ENCODE measurements at regions of chr19 and their contacts with region 1.

Region 1: GRCh38 chr19:924943-925525 is 801 bp upstream of the ARID3A start:
- DNase-seq: no peak
- H3K4me3 ChIP-seq: peak overlapping the region; percentile 70 to 97 (median 90)
- H3K27ac ChIP-seq: peak overlapping the region; percentile 90 to 96 (median 91)
- H3K4me1 ChIP-seq: peaks cover 25 to 72% (median 28%) of the 10 kb centered on the region in 3 donors
- H3K27me3 ChIP-seq: peaks cover under 1 to 16% (median 3%) of the 10 kb centered on the region in 4 donors
- CTCF ChIP-seq: no peak
- POLR2A ChIP-seq: no peak

Region 2: DNA sequence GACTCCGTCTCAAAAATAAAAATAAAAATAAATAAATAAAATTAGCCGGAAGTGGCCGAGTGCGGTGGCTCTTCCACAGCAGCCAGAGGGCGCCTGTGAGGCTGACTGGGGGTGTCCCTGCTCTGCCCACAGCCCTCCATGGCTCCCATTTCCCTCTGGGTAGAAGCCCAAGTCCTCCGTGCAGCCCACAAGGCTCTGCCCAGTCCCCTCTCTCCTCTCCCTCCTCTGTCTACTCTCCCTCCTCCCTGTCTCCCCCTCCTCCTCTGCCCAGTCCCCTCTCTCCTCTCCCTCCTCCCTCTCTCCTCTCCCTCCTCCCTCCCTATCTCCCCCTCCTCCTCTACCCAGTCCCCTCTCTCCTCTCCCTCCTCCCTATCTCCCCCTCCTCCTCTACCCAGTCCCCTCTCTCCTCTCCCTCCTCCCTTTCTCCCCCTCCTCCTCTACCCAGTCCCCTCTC is 153.7 kb before region 1 on chr19:
- intact Hi-C with region 1: loop called (anchors 5 kb)
- DNase-seq: no peak
- H3K4me3 ChIP-seq: no peak overlapping the region
- H3K27ac ChIP-seq: no peak overlapping the region
- H3K4me1 ChIP-seq: peaks cover 0 to 16% (median 0%) of the 10 kb centered on the region in 3 donors
- H3K27me3 ChIP-seq: peaks cover 0 to 9% (median 0%) of the 10 kb centered on the region in 4 donors
- CTCF ChIP-seq: peak; percentile 19 to 58 (median 46)
- POLR2A ChIP-seq: no peak

Region 3: GRCh38 chr19:860481-861101 is 64.4 kb before region 1 on chr19:
- intact Hi-C with region 1: loop called (anchors 5 kb)
- DNase-seq: no peak
- H3K4me3 ChIP-seq: peak overlapping the region; percentile 32 to 75 (median 46)
- H3K27ac ChIP-seq: peak overlapping the region in 3 of 4 donors; percentile 65 to 80 (median 72)
- H3K4me1 ChIP-seq: peaks cover 9 to 58% (median 33%) of the 10 kb centered on the region in 3 donors
- H3K27me3 ChIP-seq: peaks cover 0 to 60% (median 0%) of the 10 kb centered on the region in 4 donors
- CTCF ChIP-seq: peak in 5 of 6 experiments; percentile 9 to 29 (median 21)
- POLR2A ChIP-seq: peak in 1 of 4 donors; percentile 58

Region 4: GRCh38 chr19:973726-974562 is 48.9 kb after region 1 on chr19:
- intact Hi-C with region 1: no loop called
- DNase-seq: no peak
- H3K4me3 ChIP-seq: no peak overlapping the region
- H3K27ac ChIP-seq: no peak overlapping the region
- H3K4me1 ChIP-seq: no peaks in the 10 kb centered on the region
- H3K27me3 ChIP-seq: peaks cover 0 to 4% (median 0%) of the 10 kb centered on the region in 4 donors
- CTCF ChIP-seq: no peak
- POLR2A ChIP-seq: no peak

Region 5: DNA sequence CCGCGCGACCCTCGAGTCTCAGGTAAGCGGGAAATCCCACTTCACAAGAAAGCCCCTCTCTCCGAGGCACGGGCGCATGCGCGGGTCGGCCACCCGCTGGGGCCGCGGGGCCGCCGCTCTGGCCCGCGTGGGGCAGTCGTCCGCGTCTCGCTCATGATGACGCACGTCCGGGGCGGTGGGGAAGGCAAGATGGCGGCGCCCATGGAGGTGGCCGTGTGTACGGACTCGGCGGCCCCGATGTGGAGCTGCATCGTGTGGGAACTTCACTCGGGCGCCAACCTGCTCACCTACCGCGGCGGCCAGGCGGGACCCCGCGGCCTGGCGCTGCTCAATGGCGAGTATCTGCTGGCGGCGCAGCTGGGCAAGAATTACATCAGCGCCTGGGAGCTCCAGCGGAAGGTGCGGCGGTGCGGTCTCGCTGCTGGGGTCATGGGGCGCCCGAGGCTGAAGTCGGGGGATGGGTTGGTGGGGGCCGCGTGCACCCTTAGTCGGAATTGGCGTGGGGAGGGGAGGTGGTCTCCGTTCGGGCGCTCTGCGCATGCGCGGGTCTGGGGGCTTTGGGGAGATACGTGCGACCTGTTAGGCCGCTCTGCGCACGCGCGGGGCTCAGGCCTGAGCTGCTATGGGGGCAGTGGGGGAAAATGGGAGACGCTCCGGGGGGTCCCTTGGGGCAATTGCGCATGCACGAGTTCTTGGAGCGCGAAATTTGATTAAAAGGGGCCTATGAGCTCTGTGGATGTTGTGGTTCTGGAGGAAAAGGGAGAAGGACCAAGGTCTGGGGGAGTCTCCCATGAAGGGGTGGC is 59.3 kb after region 1 on chr19 and contains the start of gene WDR18:
- intact Hi-C with region 1: loop called (anchors 2 kb)
- DNase-seq: peak; percentile 56
- H3K4me3 ChIP-seq: peak within 1 kb of the TSS; percentile 76 to 100 (median 95)
- H3K27ac ChIP-seq: peak within 1 kb of the TSS; percentile 87 to 96 (median 91)
- H3K4me1 ChIP-seq: peaks cover 16 to 45% (median 21%) of the 10 kb centered on the region in 3 donors
- H3K27me3 ChIP-seq: peaks cover 0 to 12% (median 0%) of the 10 kb centered on the region in 4 donors
- CTCF ChIP-seq: peak in 5 of 6 experiments; percentile 18 to 71 (median 41)
- POLR2A ChIP-seq: peak in 2 of 4 donors; percentile 36 to 65
- total RNA-seq, gene WDR18: 28.2 to 70.1 (median 53.0) TPM

Measured in esophagus squamous epithelium (tissue), 5 donors.